Activated T-helper 2 cell treated with anti-CD3 and anti-CD28 coated beads, Interferon-gamma antibody, Interleukin-2, Interleukin-4, amounts not matched to agents 10 μg/mL and 5 μg/mL and 100 μg/mL, durations not matched to agents 14 hours and 24 hours and 36 hours (primary cell): ENCODE measurements at regions of chr20 and their contacts with region 1.

Region 1: GRCh38 chr20:39019805-39020325 is 57.7 kb downstream of the DHX35 start:
- DNase-seq: no peak
- H3K4me3 Mint-ChIP-seq: peak overlapping the region; percentile 14
- H3K27ac Mint-ChIP-seq: peak overlapping the region; percentile 73
- H3K4me1 Mint-ChIP-seq: peaks cover 65% of the 10 kb centered on the region
- H3K27me3 Mint-ChIP-seq: no peaks in the 10 kb centered on the region

Region 2: GRCh38 chr20:38833857-38834164 is 186.1 kb before region 1 on chr20:
- intact Hi-C with region 1: loop called (anchors 2 kb)
- DNase-seq: no peak
- H3K4me3 Mint-ChIP-seq: peak overlapping the region; percentile 42
- H3K27ac Mint-ChIP-seq: peak overlapping the region; percentile 87
- H3K4me1 Mint-ChIP-seq: peaks cover 65% of the 10 kb centered on the region
- H3K27me3 Mint-ChIP-seq: no peaks in the 10 kb centered on the region

Region 3: DNA sequence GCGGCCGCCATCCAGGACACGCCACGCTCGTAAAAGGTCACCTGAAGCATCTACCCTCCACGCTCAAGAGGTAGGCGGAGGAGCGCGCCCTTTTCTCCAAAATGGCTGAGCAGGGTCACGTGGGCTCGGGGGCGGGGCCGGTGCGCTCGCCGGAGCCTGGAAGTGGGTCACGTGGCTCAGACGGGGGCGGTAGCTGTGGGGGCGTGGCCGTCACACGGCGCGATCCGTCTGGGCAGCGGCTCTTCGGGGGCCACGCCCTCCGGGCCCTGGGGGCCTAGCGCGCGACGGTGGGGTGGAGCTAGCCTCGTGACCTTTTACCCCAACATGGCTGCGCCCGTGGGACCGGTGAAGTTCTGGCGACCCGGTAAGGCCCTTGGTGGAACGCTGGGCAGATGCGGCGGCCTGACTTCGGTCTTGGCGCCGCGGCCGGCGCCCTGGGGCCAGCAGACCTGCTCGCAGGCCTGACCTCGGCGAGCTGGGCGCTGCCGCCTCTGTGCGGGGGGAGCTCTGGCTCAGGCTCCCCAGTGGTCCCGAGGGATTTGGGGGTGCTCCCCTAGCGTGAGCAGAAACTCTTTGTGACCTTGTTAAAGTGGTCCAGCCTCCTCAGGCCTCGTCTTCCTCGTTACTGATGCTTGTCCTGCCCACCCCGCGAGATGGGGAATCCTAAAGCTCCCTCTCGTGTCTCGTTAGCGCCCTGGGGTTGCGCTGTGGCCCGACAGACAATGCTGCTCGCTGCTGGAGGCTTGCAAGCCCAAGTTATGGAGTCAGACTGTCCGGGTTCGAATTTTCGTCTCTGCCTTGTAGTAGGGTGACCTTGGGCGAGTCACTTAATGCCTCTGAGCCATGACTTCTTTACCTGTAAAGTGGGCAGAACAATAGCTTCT is 57.6 kb before region 1 on chr20 and contains the start of gene DHX35:
- intact Hi-C with region 1: loop called (anchors 2 kb)
- DNase-seq: peak; percentile 99
- H3K4me3 Mint-ChIP-seq: peak within 1 kb of the TSS; percentile 97
- H3K27ac Mint-ChIP-seq: peak within 1 kb of the TSS; percentile 95
- H3K4me1 Mint-ChIP-seq: peaks cover 34% of the 10 kb centered on the region
- H3K27me3 Mint-ChIP-seq: no peaks in the 10 kb centered on the region
- total RNA-seq, gene DHX35: 14.8 and 15.3 TPM in 2 replicates

Region 4: DNA sequence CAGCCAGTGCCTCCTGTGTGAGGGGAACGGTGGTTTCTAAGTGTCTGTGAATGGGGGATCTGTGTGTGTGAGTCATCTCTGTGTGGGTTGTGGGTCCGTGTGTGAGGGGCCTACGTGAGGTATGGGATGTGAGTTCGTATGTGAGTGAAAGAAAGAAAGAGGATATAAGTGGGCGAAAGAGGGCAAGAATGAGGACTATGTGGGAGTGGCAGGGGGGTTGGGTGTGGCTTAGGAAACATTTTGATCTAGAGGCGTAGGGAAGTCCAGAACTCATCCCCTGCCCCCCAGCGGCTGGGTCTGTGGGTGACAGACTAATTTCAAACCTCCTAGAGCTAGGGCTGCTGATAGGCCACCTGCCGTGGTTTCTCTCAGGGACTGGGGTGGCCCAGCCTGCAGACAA is 22.2 kb before region 1 on chr20:
- intact Hi-C with region 1: loop called (anchors 1 kb)
- DNase-seq: peak; percentile 39
- H3K4me3 Mint-ChIP-seq: peak overlapping the region; percentile 38
- H3K27ac Mint-ChIP-seq: peak overlapping the region; percentile 63
- H3K4me1 Mint-ChIP-seq: peaks cover 28% of the 10 kb centered on the region
- H3K27me3 Mint-ChIP-seq: no peaks in the 10 kb centered on the region